CD4-positive, alpha-beta T cell (primary cell): ENCODE measurements at regions of chr12 and their contacts with region 1.

Region 1: GRCh38 chr12:108633534-108634248 is at the start of gene SELPLG:
- DNase-seq: peak; percentile 76 to 97 (median 84)
- ATAC-seq: peak; percentile 69
- H3K4me3 ChIP-seq: peak within 1 kb of the TSS; percentile 87
- H3K4me3 Mint-ChIP-seq: peak within 1 kb of the TSS; percentile 98
- H3K27ac ChIP-seq: peak within 1 kb of the TSS; percentile 86 to 95
- H3K27ac Mint-ChIP-seq: peak within 1 kb of the TSS; percentile 100
- H3K4me1 ChIP-seq: peaks cover 69% of the 10 kb centered on the region
- H3K4me1 Mint-ChIP-seq: peaks cover 73% of the 10 kb centered on the region
- H3K27me3 ChIP-seq: no peaks in the 10 kb centered on the region
- H3K27me3 Mint-ChIP-seq: no peaks in the 10 kb centered on the region
- CTCF ChIP-seq: no peak
- total RNA-seq, gene SELPLG: 25.7 to 27.8 TPM

Region 2: GRCh38 chr12:108551535-108551934 is 82.2 kb before region 1 on chr12:
- CTCF ChIA-PET with region 1: no interaction called
- POLR2A ChIA-PET with region 1: no interaction called
- intact Hi-C with region 1: no loop called
- DNase-seq: no peak
- ATAC-seq: no peak
- H3K4me3 ChIP-seq: no peak overlapping the region
- H3K4me3 Mint-ChIP-seq: no peak overlapping the region
- H3K27ac ChIP-seq: no peak overlapping the region
- H3K27ac Mint-ChIP-seq: peak overlapping the region; percentile 54
- H3K4me1 ChIP-seq: peaks cover 20% of the 10 kb centered on the region
- H3K4me1 Mint-ChIP-seq: peaks cover 70% of the 10 kb centered on the region
- H3K27me3 ChIP-seq: no peaks in the 10 kb centered on the region
- H3K27me3 Mint-ChIP-seq: no peaks in the 10 kb centered on the region
- CTCF ChIP-seq: no peak

Region 3: GRCh38 chr12:108570743-108571608 is 62.7 kb before region 1 on chr12:
- CTCF ChIA-PET with region 1: interaction called, 12 read pairs
- POLR2A ChIA-PET with region 1: interaction called, 164 read pairs
- intact Hi-C with region 1: no loop called
- DNase-seq: peak in 2 of 14 experiments; percentile 47 to 48
- ATAC-seq: no peak
- H3K4me3 ChIP-seq: no peak overlapping the region
- H3K4me3 Mint-ChIP-seq: peak overlapping the region; percentile 11
- H3K27ac ChIP-seq: peak overlapping the region; percentile 29 to 33
- H3K27ac Mint-ChIP-seq: peak overlapping the region; percentile 90
- H3K4me1 ChIP-seq: peaks cover 59% of the 10 kb centered on the region
- H3K4me1 Mint-ChIP-seq: peaks cover 93% of the 10 kb centered on the region
- H3K27me3 ChIP-seq: no peaks in the 10 kb centered on the region
- H3K27me3 Mint-ChIP-seq: no peaks in the 10 kb centered on the region
- CTCF ChIP-seq: no peak

Region 4: DNA sequence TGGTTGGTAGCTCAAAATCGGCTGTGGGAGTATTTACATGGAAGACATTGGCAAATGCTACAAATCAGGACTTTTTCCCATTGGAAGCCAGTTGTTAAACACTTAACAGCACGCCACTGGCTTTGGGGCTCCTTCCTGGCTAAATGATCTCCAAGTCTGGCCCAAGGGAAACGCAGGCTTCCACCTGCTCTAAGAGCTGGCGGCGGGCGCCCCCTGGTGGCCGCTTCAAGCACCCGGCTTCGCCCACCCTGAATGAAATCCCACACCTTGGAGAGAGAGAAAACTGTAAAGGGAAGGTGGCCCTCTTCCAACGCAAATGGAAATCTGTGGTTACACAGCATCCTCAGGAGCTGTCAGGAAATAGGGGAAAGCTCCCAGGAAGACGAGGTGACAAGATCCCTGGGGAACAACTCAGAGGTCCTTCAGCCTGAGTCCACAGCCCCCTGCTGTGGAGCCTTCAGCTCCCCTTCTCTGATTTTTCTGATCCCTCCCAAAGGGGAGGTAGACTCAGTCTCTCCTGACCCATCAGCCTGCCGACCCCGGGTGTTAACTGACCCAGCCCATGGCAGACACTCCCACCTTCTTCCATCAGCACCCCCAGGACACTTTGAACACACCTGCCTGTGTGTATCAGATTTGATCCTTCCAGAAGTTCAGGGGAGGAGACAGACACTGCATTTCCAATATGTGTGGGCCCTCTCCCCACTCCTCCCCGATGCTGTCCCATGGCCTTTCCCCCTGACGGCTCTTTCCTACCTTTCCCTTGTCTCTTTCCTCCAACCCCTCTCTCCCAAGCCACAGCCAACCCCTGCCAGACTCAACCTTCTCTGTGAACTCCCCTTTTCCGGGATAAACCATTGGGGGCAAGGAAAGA is 15.4 kb before region 1 on chr12:
- CTCF ChIA-PET with region 1: interaction called, 128 read pairs
- POLR2A ChIA-PET with region 1: interaction called, 186 read pairs
- intact Hi-C with region 1: loop called (anchors 1 to 2 kb)
- DNase-seq: peak; percentile 61 to 89 (median 72)
- ATAC-seq: peak; percentile 54
- H3K4me3 ChIP-seq: no peak overlapping the region
- H3K4me3 Mint-ChIP-seq: peak overlapping the region; percentile 30
- H3K27ac ChIP-seq: peak overlapping the region; percentile 49 to 80
- H3K27ac Mint-ChIP-seq: peak overlapping the region; percentile 84
- H3K4me1 ChIP-seq: peaks cover 63% of the 10 kb centered on the region
- H3K4me1 Mint-ChIP-seq: peaks cover 59% of the 10 kb centered on the region
- H3K27me3 ChIP-seq: no peaks in the 10 kb centered on the region
- H3K27me3 Mint-ChIP-seq: no peaks in the 10 kb centered on the region
- CTCF ChIP-seq: peak; percentile 98

Region 5: DNA sequence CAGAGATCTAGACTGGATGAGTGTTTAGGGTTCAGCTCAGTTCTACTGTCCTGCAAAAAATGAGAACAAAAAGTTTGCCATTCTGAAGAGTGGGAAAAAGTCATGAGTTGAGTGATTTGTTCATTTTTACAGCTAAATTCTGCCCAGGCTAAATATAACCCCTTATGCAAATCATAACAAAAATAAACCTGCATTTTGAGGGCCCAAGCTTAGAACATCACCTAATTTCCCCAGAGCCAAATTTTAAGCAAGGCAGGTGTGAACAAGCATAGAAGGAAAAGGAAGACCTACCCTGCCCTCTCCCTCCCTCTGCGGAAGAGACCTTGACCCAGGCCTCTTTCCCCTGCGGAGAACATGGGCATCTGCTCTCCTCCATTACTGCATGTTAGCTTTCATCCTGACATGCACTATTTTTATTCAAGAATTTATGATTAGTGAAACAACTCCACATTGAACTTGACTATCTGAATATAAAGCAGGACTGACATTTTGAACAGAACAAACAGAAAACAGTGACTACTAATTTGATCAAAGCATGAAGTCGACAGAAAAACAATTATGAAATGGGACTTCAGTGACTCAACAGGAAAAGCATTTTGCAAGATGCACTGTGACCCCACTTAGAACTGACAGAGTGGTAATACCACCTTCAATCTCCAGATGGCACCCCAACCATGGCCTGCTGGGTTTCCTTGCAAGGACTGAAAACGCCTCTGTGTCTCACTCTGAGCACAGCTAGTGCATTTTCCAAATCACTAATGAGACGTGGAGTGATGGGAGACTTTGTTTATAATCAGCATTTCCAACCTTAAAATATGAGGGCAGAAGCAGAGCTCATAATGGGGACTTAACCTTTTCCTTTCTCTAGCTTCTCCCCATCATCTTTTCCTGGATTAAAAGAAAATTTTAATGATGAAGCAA is 30.9 kb after region 1 on chr12:
- CTCF ChIA-PET with region 1: interaction called, 31 read pairs
- POLR2A ChIA-PET with region 1: interaction called, 18 read pairs
- intact Hi-C with region 1: loop called in 1 of 2 experiments (anchors 2 kb)
- DNase-seq: peak; percentile 69 to 90 (median 79)
- ATAC-seq: peak; percentile 100
- H3K4me3 ChIP-seq: no peak overlapping the region
- H3K4me3 Mint-ChIP-seq: no peak overlapping the region
- H3K27ac ChIP-seq: no peak overlapping the region
- H3K27ac Mint-ChIP-seq: peak overlapping the region; percentile 72
- H3K4me1 ChIP-seq: peaks cover 6% of the 10 kb centered on the region
- H3K4me1 Mint-ChIP-seq: peaks cover 7% of the 10 kb centered on the region
- H3K27me3 ChIP-seq: no peaks in the 10 kb centered on the region
- H3K27me3 Mint-ChIP-seq: no peaks in the 10 kb centered on the region
- CTCF ChIP-seq: peak; percentile 91

Region 6: DNA sequence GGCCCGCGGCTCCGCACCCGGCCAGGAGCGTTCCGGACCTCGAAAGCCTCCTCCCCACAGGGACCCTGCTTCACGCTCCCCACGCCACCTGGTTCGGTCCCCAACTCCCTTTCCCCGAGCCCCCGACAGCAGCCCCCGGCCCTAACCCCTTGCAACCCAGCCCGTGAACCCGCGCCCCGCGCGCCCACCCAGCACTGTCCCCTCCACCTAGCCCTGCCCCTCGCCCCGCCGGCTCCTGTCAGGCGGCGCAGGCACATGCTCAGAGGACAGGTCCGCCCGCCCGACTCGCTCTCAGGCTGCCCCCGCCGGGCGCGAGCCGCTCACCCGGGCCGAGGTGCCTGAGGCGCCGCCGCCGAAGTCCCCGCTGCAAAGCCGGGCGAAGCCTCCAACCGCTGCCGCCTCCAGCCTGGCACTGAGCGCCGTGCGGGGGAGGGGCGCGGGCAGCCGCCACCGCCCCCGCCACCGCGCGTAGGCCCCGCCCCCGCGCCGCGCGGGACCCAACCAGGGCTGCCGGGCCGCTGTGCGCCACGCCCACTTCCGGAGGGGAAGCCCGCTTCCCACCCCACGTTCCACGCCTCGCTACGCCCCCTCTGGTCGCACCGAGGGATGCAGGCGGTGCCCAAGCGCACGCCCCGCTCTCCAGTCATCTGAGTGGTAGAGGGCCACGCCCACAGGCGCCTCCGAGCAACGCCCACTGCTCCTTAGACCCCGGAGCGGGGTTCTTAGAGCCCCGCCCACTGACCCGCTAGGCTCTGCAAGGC is 97.6 kb after region 1 on chr12 and contains the start of gene CORO1C:
- CTCF ChIA-PET with region 1: no interaction called
- POLR2A ChIA-PET with region 1: interaction called, 9 read pairs
- intact Hi-C with region 1: loop called (anchors 5 kb)
- DNase-seq: peak; percentile 88 to 99 (median 92)
- ATAC-seq: peak; percentile 73
- H3K4me3 ChIP-seq: peak within 1 kb of the TSS; percentile 93
- H3K4me3 Mint-ChIP-seq: peak within 1 kb of the TSS; percentile 97
- H3K27ac ChIP-seq: peak within 1 kb of the TSS; percentile 75 to 90
- H3K27ac Mint-ChIP-seq: peak within 1 kb of the TSS; percentile 88
- H3K4me1 ChIP-seq: peaks cover 26% of the 10 kb centered on the region
- H3K4me1 Mint-ChIP-seq: peaks cover 26% of the 10 kb centered on the region
- H3K27me3 ChIP-seq: no peaks in the 10 kb centered on the region
- H3K27me3 Mint-ChIP-seq: no peaks in the 10 kb centered on the region
- CTCF ChIP-seq: peak; percentile 75
- total RNA-seq, gene CORO1C: 6.7 to 7.4 TPM

Region 7: GRCh38 chr12:109052414-109053323 is 419.0 kb after region 1 on chr12 and contains the start of gene USP30:
- CTCF ChIA-PET with region 1: no interaction called
- POLR2A ChIA-PET with region 1: no interaction called
- intact Hi-C with region 1: loop called in 1 of 2 experiments (anchors 10 kb)
- DNase-seq: peak; percentile 75 to 93 (median 81)
- ATAC-seq: peak; percentile 77
- H3K4me3 ChIP-seq: peak within 1 kb of the TSS; percentile 92
- H3K4me3 Mint-ChIP-seq: peak within 1 kb of the TSS; percentile 98
- H3K27ac ChIP-seq: peak within 1 kb of the TSS; percentile 87
- H3K27ac Mint-ChIP-seq: peak within 1 kb of the TSS; percentile 86
- H3K4me1 ChIP-seq: peaks cover 23% of the 10 kb centered on the region
- H3K4me1 Mint-ChIP-seq: peaks cover 13% of the 10 kb centered on the region
- H3K27me3 ChIP-seq: no peaks in the 10 kb centered on the region
- H3K27me3 Mint-ChIP-seq: no peaks in the 10 kb centered on the region
- CTCF ChIP-seq: no peak
- total RNA-seq, gene USP30: 21.8 to 23.0 TPM